ENCODE measurements at regions of chr1 and their contacts with region 1.

Region 1: GRCh38 chr1:168572633-168573032 is 3.8 kb upstream of the XCL1 start:
- DNase-seq: no peak
- ATAC-seq: no peak
- H3K4me3 ChIP-seq: no peak overlapping the region
- H3K27ac ChIP-seq: no peak overlapping the region
- H3K4me1 ChIP-seq: no peaks in the 10 kb centered on the region
- H3K27me3 ChIP-seq: no peaks in the 10 kb centered on the region
- CTCF ChIP-seq: no peak

Region 2: DNA sequence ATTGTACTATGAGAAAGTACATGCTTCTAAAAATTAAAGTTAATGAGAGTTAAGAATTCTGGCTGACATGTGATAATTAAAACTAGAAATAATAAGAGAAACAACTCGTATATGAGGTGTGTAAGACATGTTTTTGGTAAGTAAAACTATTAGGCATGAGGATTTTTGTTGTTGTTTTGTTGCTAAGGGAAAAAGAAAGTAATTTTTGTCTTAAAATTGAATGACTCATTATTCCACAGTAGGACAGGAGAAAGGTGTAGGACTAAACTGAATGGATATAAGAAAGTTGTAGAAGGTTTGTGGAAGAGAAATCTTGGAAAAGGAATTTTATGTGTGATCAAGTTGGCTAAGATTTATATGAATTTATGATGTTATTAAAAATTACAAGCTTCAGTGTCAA is 237.1 kb before region 1 on chr1:
- intact Hi-C with region 1: loop called in 8 of 10 experiments (anchors 5 kb)
- DNase-seq: no peak
- ATAC-seq: no peak
- H3K4me3 ChIP-seq: no peak overlapping the region
- H3K27ac ChIP-seq: no peak overlapping the region
- H3K4me1 ChIP-seq: peaks cover 0 to 2% (median 0%) of the 10 kb centered on the region in 9 donors
- H3K27me3 ChIP-seq: no peaks in the 10 kb centered on the region
- CTCF ChIP-seq: no peak

Region 3: GRCh38 chr1:168342572-168343280 is 229.9 kb before region 1 on chr1:
- intact Hi-C with region 1: loop called in 9 of 10 experiments (anchors 2 to 5 kb)
- DNase-seq: peak; percentile 86 to 90
- ATAC-seq: peak; percentile 96 to 98 (median 98)
- H3K4me3 ChIP-seq: peak overlapping the region in 6 of 10 donors; percentile 30 to 37 (median 36)
- H3K27ac ChIP-seq: peak overlapping the region in 6 of 10 donors; percentile 24 to 66 (median 58)
- H3K4me1 ChIP-seq: peaks cover 0 to 33% (median 11%) of the 10 kb centered on the region in 9 donors
- H3K27me3 ChIP-seq: no peaks in the 10 kb centered on the region
- CTCF ChIP-seq: peak; percentile 68 to 90 (median 85)